Activated B cell treated with CpG ODN at 0.5 μM for 24 hours (primary cell): ENCODE measurements at regions of chr1 and their contacts with region 1.

Region 1: DNA sequence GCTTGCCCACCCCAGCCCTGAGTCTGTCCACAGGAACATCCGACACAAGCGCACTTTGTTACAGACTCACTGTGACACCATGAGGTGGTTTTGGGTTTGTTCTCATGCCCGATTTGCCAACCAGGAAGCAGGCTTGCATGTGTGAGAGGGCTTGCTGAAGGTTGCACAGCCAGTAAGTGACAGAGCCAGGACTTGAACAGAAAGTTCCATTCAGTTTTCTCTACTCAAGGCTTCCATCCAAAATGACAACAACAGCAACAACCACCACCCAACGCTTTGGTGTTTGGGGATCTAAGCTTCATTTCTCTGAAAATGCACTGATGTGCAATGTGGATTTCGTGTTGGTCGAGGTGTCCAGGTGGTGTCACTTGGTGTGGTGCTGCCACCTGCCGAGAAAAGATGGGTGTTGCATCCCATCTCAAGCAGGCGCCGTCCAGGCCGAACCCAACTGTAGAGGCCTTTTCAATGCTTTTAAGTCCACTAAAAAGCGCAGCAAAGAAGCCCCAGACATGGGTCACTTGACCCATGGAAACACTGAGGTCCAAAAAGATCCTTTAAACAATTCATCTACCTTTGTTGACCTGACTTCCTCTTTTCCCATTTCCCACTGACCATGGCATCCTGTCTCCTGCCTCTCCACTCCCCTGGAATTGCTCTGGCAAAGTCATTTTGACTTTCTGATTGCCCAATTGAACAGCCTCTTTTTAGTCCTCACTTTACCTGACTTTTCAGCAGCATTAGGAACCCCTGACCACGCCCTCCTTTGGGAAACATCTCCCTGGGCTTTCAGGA is 12.2 kb downstream of the CITED4 start:
- DNase-seq: peak; percentile 67
- ATAC-seq: peak; percentile 97
- H3K4me3 Mint-ChIP-seq: no peak overlapping the region
- H3K27ac Mint-ChIP-seq: no peak overlapping the region
- H3K4me1 Mint-ChIP-seq: peaks cover 10% of the 10 kb centered on the region
- H3K27me3 Mint-ChIP-seq: no peaks in the 10 kb centered on the region
- CTCF ChIP-seq: peak; percentile 46

Region 2: DNA sequence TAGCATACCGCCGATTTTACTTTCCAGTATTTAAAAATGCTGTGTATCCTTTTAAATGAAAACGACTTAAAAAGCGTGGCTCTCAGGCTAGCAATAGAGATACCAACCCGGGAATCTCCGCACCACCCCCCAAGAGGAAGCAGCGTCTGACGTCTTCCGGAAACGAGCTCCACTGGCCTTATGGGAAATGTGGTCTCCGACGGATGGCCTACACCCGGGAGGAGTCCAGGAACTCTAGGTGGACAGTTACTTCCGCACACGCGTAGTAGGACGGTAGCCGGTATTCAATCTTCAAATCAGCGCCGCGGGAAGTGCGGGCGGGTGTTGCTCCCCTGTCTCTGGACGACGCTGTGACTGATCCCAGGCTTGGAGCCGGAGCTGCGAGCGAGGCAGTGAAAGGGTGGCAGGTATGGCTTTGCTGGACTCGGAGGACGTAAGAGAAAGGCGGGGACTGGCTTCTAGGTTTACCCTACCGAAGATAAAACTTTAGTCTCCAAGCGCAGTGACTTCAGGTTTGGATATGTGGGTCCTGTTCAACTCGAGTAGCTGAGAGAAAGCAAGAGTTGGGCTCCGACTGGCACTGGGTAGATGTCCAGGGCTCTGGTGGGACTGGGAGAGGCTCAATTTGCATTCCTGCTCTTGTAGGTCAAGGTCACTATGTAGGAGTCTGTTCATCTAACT is 318.5 kb before region 1 on chr1 and contains the start of gene ZNF684:
- CTCF ChIA-PET with region 1: interaction called, 5 read pairs
- POLR2A ChIA-PET with region 1: interaction called, 4 read pairs
- intact Hi-C with region 1: loop called (anchors 2 kb)
- DNase-seq: peak; percentile 65
- ATAC-seq: peak; percentile 98
- H3K4me3 Mint-ChIP-seq: peak within 1 kb of the TSS; percentile 97
- H3K27ac Mint-ChIP-seq: peak within 1 kb of the TSS; percentile 92
- H3K4me1 Mint-ChIP-seq: peaks cover 29% of the 10 kb centered on the region
- H3K27me3 Mint-ChIP-seq: peaks cover 2% of the 10 kb centered on the region
- CTCF ChIP-seq: no peak
- total RNA-seq, gene ZNF684: 5.0 and 5.4 TPM in 2 replicates

Region 3: DNA sequence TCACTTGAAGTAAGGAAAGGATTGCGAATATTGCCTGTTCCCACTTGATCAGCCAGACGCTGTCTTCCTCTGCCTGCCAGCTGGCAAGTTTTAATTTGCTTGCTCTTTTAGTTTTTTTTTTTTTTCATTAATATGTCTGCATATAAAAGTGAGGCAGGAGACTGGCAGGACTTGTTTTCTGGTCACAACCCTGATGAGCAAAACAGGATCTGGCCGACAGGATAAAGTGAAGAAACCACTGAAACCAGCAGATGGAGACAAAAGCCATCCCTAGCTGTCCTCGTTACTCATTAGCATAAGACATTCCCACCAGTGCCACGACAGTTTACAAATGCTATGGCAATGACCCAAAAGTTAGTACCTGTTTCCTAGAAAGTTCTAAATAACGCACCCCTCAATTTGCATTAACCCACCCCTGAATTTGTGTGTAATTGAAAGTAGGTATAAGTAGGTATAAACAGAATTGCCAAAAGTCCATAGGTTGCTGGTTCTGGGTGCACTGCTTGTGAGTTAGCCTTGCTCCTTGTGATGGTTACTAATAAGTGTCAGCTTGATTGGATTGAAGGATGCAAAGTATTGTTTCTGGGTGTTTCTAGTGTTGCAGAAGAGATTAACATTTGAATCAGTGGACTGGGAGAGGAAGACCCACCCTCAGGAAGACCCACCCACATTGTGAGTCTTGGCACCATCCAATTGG is 257.7 kb before region 1 on chr1:
- CTCF ChIA-PET with region 1: no interaction called
- POLR2A ChIA-PET with region 1: interaction called, 17 read pairs
- intact Hi-C with region 1: loop called (anchors 1 kb)
- DNase-seq: no peak
- ATAC-seq: no peak
- H3K4me3 Mint-ChIP-seq: no peak overlapping the region
- H3K27ac Mint-ChIP-seq: no peak overlapping the region
- H3K4me1 Mint-ChIP-seq: no peaks in the 10 kb centered on the region
- H3K27me3 Mint-ChIP-seq: peaks cover 7% of the 10 kb centered on the region
- CTCF ChIP-seq: no peak

Region 4: DNA sequence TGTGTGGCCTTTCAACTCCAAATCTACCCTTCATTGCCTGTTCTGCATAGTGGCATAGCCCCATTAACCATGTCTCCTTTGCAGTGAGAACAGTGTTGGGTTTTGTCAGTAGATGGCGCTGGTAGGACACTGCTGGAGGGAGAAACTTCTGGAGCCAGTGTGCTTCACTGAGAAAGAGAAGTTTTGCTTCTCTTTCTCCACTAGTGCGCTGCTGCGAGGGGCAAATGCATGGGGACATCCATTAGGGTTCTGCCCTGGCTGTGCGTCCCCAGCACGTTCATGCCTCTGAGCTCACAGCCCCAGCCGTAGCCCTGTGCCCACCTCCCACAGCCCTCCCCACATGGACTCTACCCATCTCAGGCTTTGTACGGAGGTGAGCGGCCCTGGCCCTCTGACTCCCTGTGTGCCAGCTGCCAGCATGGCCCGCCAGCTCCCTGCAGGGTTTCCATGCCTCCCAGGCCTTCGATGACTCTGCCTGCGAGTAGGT is 237.6 kb before region 1 on chr1:
- CTCF ChIA-PET with region 1: interaction called, 5 read pairs
- POLR2A ChIA-PET with region 1: no interaction called
- intact Hi-C with region 1: loop called (anchors 1 kb)
- DNase-seq: peak; percentile 27
- ATAC-seq: peak; percentile 96
- H3K4me3 Mint-ChIP-seq: no peak overlapping the region
- H3K27ac Mint-ChIP-seq: no peak overlapping the region
- H3K4me1 Mint-ChIP-seq: no peaks in the 10 kb centered on the region
- H3K27me3 Mint-ChIP-seq: peaks cover 2% of the 10 kb centered on the region
- CTCF ChIP-seq: peak; percentile 52

Region 5: DNA sequence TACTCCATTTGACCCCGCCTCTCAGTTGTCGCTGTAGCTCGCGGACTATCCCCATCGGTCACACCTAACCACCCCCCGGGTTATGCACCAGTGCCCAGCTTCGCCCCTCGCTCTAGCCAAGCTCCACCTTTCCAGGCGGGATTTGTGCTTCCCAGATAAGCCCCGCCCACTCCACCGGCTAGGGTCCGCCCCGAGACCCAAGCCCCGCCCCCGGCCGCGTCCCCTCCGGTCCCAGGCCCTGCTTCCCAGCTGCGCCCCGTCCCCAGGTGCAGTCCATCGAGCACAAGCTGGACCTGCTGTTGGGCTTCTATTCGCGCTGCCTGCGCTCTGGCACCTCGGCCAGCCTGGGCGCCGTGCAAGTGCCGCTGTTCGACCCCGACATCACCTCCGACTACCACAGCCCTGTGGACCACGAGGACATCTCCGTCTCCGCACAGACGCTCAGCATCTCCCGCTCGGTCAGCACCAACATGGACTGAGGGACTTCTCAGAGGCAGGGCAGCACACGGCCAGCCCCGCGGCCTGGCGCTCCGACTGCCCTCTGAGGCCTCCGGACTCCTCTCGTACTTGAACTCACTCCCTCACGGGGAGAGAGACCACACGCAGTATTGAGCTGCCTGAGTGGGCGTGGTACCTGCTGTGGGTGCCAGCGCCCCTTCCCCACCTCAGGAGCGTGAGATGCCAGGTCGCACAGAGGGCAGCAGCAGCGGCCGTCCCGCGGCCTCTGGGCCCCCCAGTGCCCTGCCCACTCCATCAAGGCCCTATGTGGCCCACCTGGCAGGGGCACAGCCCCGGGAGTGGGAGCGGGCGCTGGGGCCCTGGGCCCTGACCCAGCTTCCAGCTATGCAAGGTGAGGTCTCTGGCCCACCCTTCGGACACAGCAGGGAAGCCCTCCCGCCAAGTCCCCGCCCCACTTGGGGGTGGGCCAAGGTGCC is 11.7 kb before region 1 on chr1:
- CTCF ChIA-PET with region 1: no interaction called
- POLR2A ChIA-PET with region 1: no interaction called
- intact Hi-C with region 1: no loop called
- DNase-seq: no peak
- ATAC-seq: no peak
- H3K4me3 Mint-ChIP-seq: no peak overlapping the region
- H3K27ac Mint-ChIP-seq: no peak overlapping the region
- H3K4me1 Mint-ChIP-seq: no peaks in the 10 kb centered on the region
- H3K27me3 Mint-ChIP-seq: peaks cover 13% of the 10 kb centered on the region
- CTCF ChIP-seq: no peak

Region 6: GRCh38 chr1:40951943-40952743 is 102.1 kb after region 1 on chr1:
- CTCF ChIA-PET with region 1: interaction called, 4 read pairs
- POLR2A ChIA-PET with region 1: no interaction called
- intact Hi-C with region 1: loop called (anchors 1 kb)
- DNase-seq: peak; percentile 47
- ATAC-seq: peak; percentile 64
- H3K4me3 Mint-ChIP-seq: no peak overlapping the region
- H3K27ac Mint-ChIP-seq: peak overlapping the region; percentile 42
- H3K4me1 Mint-ChIP-seq: peaks cover 5% of the 10 kb centered on the region
- H3K27me3 Mint-ChIP-seq: peaks cover 36% of the 10 kb centered on the region
- CTCF ChIP-seq: peak; percentile 23

Region 7: DNA sequence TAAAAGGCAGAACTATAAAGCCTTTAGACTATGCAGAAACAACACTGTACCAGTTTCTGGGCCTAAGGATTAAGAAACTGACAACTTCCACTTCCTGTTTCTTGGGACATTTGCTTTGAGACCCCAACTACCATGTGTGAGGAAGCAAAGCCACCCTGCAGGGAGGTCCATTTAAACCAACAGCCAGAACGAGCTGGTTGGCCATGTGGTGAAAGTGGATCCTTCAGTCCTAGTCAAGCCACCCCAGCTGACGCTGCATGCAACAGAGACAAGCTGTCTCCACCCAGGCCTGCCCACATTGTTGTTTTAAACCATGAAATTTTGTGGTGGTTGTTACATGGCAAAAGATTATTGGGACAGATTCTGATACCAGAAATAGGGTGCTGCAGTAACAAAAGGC is 203.3 kb after region 1 on chr1:
- CTCF ChIA-PET with region 1: no interaction called
- POLR2A ChIA-PET with region 1: no interaction called
- intact Hi-C with region 1: no loop called
- DNase-seq: no peak
- ATAC-seq: peak; percentile 25
- H3K4me3 Mint-ChIP-seq: no peak overlapping the region
- H3K27ac Mint-ChIP-seq: no peak overlapping the region
- H3K4me1 Mint-ChIP-seq: peaks cover 7% of the 10 kb centered on the region
- H3K27me3 Mint-ChIP-seq: no peaks in the 10 kb centered on the region
- CTCF ChIP-seq: no peak